A673 (cell line): ENCODE measurements at regions of chr16 and their contacts with region 1.

Region 1: GRCh38 chr16:69123910-69124309 is 8.5 kb downstream of the CHTF8 start:
- DNase-seq: peak; percentile 88
- H3K4me3 ChIP-seq: no peak overlapping the region
- H3K27ac ChIP-seq: no peak overlapping the region
- H3K4me1 ChIP-seq: no peaks in the 10 kb centered on the region
- H3K27me3 ChIP-seq: no peaks in the 10 kb centered on the region
- CTCF ChIP-seq: peak; percentile 78

Region 2: DNA sequence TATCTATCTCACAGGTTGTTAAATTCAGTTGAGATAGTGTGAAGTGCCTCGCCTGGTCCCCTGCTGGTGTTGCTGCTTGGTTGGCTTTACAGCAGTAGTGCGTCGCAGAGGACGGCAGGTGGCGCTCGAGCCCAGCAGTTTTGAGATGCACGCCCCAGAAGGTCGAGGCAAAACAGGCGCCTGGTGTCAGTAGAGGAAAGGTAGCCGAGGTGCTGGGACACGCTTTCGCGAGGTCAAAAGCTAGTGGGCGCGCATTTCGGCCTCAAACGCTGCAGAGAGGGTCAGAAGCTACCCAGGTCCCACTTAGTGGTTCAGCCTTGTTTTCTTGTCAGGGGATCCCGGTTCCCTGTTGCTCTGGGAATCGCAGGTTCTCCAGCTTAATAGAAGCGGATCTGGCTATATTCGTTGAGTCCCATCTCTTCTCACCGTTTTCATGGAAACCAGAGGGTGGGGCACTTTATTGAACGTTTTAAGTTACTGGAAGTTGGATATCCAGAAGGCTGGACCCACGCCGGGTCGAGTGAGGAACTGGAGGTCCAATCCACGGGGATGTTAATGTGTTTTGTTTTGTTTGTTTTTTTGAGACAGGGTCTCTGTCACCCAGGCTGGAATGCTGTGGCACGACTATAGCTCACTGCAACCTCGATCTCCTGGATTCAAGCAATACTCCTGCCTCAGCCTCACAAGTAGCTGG is 595.1 kb before region 1 on chr16:
- CTCF ChIA-PET with region 1: interaction called, 3 read pairs
- POLR2A ChIA-PET with region 1: no interaction called
- intact Hi-C with region 1: loop called (anchors 2 kb)
- DNase-seq: peak; percentile 88
- H3K4me3 ChIP-seq: peak overlapping the region; percentile 62
- H3K27ac ChIP-seq: no peak overlapping the region
- H3K4me1 ChIP-seq: peaks cover 8% of the 10 kb centered on the region
- H3K27me3 ChIP-seq: no peaks in the 10 kb centered on the region
- CTCF ChIP-seq: peak; percentile 91

Region 3: DNA sequence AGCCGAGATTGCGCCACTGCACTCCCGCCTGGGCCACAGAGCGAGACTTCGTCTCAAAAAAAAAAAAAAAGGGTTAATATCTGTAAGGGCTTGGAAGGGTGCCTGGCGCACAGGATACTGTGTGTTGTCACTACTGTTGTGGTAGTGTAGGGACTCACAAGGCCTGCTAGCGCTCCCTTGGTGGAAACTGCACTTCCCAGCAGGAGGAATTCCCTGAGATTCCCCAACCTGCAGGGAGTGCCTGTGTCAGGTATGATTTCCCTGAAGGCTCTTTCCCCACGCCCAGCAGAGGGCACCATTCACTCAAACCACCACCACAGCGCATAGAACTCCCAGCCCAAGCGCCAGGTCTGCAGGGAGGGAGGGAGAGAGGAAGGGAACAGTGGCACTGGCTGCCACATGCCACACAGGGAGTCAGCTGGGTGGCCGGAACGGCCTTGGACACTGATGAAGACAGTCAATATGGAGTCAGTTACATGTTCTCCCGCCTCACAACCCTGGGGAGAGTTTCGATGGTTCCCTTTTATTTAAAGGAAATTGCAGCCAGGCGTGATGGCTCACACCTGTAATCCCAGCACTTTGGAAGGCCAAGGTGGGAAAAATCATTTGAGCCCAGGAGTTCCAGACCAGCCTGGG is 419.6 kb before region 1 on chr16:
- CTCF ChIA-PET with region 1: no interaction called
- POLR2A ChIA-PET with region 1: no interaction called
- intact Hi-C with region 1: loop called (anchors 2 kb)
- DNase-seq: peak; percentile 79
- H3K4me3 ChIP-seq: no peak overlapping the region
- H3K27ac ChIP-seq: no peak overlapping the region
- H3K4me1 ChIP-seq: no peaks in the 10 kb centered on the region
- H3K27me3 ChIP-seq: no peaks in the 10 kb centered on the region
- CTCF ChIP-seq: peak; percentile 82

Region 4: GRCh38 chr16:68843482-68844210 is 280.3 kb before region 1 on chr16 and contains the start of gene TANGO6:
- CTCF ChIA-PET with region 1: interaction called, 9 read pairs
- POLR2A ChIA-PET with region 1: no interaction called
- intact Hi-C with region 1: loop called (anchors 1 kb)
- DNase-seq: peak; percentile 91
- H3K4me3 ChIP-seq: peak within 1 kb of the TSS; percentile 72
- H3K27ac ChIP-seq: peak within 1 kb of the TSS; percentile 93
- H3K4me1 ChIP-seq: peaks cover 7% of the 10 kb centered on the region
- H3K27me3 ChIP-seq: no peaks in the 10 kb centered on the region
- CTCF ChIP-seq: peak; percentile 64
- total RNA-seq, gene TANGO6: 15.8 and 18.0 TPM in 2 replicates

Region 5: GRCh38 chr16:68902008-68902968 is 221.6 kb before region 1 on chr16:
- CTCF ChIA-PET with region 1: no interaction called
- POLR2A ChIA-PET with region 1: no interaction called
- intact Hi-C with region 1: loop called (anchors 2 kb)
- DNase-seq: peak; percentile 68
- H3K4me3 ChIP-seq: no peak overlapping the region
- H3K27ac ChIP-seq: peak overlapping the region; percentile 9
- H3K4me1 ChIP-seq: peaks cover 17% of the 10 kb centered on the region
- H3K27me3 ChIP-seq: no peaks in the 10 kb centered on the region
- CTCF ChIP-seq: peak; percentile 86

Region 6: DNA sequence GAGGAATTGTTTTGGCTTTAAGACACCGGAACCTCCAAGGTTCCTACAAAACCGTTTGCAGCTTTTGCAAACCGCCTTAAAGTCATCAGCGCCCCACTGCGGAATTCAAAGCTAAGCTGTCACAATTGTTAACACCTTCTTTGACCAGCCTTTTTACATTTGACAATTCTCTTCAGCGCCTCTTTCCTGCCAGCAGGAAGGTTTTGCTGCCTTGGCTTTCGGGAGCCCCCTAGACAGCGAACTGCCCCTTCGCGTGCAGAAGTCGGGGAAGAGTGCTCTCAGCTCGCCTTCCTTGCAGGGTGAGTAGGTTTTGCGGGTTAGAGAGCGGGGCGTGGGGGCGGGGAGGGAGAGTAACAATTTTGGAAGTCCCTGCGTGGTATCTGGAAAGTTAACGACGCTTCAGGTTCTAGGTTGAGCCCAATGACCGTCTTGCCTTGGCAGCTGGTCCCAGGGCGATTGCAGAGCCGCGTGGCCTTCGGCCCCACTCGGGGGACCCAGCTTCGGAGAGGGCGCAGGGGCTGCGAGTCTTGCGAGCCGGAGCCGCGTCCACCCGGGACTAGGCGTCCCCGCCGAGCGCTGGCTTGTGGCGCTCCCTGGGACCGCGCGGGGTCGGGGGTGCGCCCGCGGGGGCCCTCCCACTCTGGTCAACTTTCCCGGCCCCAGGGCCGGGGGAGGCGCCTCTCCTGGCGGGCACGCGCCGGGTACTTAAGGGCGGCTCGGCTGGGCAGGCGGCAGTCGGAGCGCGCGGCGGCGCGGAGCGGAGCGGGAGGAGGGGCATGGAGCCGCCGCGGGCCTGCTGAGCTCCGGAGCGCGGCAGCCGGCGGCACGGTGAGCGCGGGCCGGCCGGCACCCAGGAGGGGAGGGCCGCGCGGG is 18.2 kb before region 1 on chr16 and contains the start of gene HAS3:
- CTCF ChIA-PET with region 1: interaction called, 3 read pairs
- POLR2A ChIA-PET with region 1: interaction called, 10 read pairs
- intact Hi-C with region 1: no loop called
- DNase-seq: peak; percentile 79
- H3K4me3 ChIP-seq: peak within 1 kb of the TSS; percentile 66
- H3K27ac ChIP-seq: no peak within 1 kb of the TSS
- H3K4me1 ChIP-seq: peaks cover 8% of the 10 kb centered on the region
- H3K27me3 ChIP-seq: no peaks in the 10 kb centered on the region
- CTCF ChIP-seq: peak; percentile 63
- total RNA-seq, gene HAS3: 0.49 and 0.72 TPM in 2 replicates

Region 7: DNA sequence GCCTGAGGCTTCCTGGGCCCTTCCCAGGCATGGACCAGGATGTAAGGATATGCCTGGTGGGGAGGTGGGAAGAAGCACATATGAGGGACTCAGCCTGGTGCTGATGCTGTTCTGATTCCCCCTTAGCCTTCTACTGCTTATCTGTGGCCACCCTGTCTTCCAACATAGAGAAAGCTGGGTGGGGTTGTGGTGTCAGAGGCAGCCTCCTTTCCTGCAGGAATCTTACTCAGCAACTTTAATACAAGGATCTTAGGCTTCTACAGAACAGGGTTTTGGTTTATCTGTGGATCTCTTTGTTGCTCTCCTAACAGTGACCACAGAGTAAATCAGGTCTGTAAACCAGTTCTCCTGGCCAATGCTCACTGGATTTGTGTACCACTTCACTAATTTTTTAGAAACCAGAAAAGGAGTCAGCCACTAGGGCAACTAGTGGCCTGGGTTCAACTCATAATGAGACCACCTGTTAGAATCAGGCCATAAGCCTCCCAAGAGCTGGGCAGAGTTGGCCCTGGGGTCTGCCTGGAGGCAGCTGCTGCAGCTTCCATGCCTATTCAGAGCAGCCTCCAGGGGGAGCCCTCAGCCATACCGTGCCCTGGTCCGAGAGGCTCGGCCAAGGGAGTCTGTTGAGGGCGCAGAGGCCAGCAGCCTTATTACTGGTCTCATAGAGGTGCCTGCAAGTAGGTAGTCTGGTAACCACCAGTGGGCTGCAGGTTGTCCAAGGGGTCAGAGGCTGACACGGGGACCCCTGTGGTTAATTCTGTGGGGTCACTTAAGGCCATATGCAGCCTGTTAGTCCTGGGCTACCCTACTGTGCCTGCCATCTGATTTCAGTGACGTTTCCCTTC is 11.4 kb before region 1 on chr16:
- CTCF ChIA-PET with region 1: interaction called, 10 read pairs
- POLR2A ChIA-PET with region 1: interaction called, 10 read pairs
- intact Hi-C with region 1: no loop called
- DNase-seq: peak; percentile 48
- H3K4me3 ChIP-seq: no peak overlapping the region
- H3K27ac ChIP-seq: no peak overlapping the region
- H3K4me1 ChIP-seq: no peaks in the 10 kb centered on the region
- H3K27me3 ChIP-seq: no peaks in the 10 kb centered on the region
- CTCF ChIP-seq: peak; percentile 95

Region 8: GRCh38 chr16:69761983-69762813 is 638.3 kb after region 1 on chr16 and contains the start of gene WWP2:
- CTCF ChIA-PET with region 1: no interaction called
- POLR2A ChIA-PET with region 1: no interaction called
- intact Hi-C with region 1: no loop called
- DNase-seq: peak; percentile 86
- H3K4me3 ChIP-seq: peak within 1 kb of the TSS; percentile 89
- H3K27ac ChIP-seq: peak within 1 kb of the TSS; percentile 78
- H3K4me1 ChIP-seq: no peaks in the 10 kb centered on the region
- H3K27me3 ChIP-seq: no peaks in the 10 kb centered on the region
- CTCF ChIP-seq: no peak
- total RNA-seq, gene WWP2: 32.4 and 38.5 TPM in 2 replicates